CD4-positive, alpha-beta T cell (primary cell): ENCODE measurements at regions of chr22 and their contacts with region 1.

Region 1: DNA sequence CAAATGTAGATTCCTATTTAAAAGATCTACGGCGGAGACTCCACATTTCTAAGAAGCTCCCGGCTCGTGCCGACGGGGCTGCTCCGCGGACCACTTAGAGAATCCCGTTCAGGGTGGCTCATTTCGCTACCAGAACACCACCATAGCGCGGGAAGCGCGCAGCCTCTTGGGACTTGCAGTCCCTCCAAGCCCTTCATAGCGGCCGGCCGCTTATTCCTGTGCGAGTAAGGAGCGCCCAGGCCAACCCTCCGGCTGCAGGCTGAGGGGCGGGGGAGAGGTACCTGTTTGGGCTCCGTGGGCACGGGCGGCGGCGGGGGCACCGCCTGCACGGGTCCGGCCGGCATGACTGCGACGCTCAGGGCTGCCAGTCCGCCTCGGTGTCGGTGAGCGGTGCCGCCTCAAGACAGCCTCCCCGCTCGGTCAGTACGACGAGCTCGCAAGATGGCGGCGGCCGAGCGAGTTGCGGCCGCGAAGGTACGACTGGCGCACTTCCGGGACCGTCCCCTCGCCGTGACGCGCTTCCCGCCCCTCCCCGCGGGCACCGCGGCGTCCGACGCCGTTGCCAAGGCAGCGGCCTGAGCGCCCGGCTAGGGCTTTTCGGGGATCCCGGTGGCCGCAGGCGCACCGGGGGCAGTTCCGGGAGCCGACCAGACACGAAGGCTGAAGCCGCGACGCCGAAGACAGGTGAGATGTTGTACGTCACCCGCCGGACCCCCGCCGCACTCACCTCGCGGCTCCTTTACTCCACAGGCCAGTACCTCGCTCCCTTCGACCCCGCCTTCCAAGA is at the starts of genes CCDC157 and SF3A1:
- DNase-seq: peak; percentile 70 to 95 (median 80)
- ATAC-seq: peak; percentile 85
- H3K4me3 ChIP-seq: peak within 1 kb of the TSS; percentile 90
- H3K4me3 Mint-ChIP-seq: peak within 1 kb of the TSS; percentile 100
- H3K27ac ChIP-seq: peak within 1 kb of the TSS; percentile 89 to 95
- H3K27ac Mint-ChIP-seq: peak within 1 kb of the TSS; percentile 99
- H3K4me1 ChIP-seq: peaks cover 51% of the 10 kb centered on the region
- H3K4me1 Mint-ChIP-seq: peaks cover 57% of the 10 kb centered on the region
- H3K27me3 ChIP-seq: no peaks in the 10 kb centered on the region
- H3K27me3 Mint-ChIP-seq: no peaks in the 10 kb centered on the region
- CTCF ChIP-seq: no peak
- total RNA-seq, gene CCDC157: 8.3 to 10.1 TPM
- total RNA-seq, gene SF3A1: 335 to 388 TPM

Region 2: GRCh38 chr22:30297991-30298719 is 58.5 kb before region 1 on chr22:
- CTCF ChIA-PET with region 1: no interaction called
- POLR2A ChIA-PET with region 1: interaction called, 88 read pairs
- intact Hi-C with region 1: no loop called
- DNase-seq: no peak
- ATAC-seq: no peak
- H3K4me3 ChIP-seq: no peak overlapping the region
- H3K4me3 Mint-ChIP-seq: peak overlapping the region; percentile 4
- H3K27ac ChIP-seq: peak overlapping the region; percentile 74 to 86
- H3K27ac Mint-ChIP-seq: peak overlapping the region; percentile 83
- H3K4me1 ChIP-seq: peaks cover 89% of the 10 kb centered on the region
- H3K4me1 Mint-ChIP-seq: peaks cover 83% of the 10 kb centered on the region
- H3K27me3 ChIP-seq: no peaks in the 10 kb centered on the region
- H3K27me3 Mint-ChIP-seq: no peaks in the 10 kb centered on the region
- CTCF ChIP-seq: no peak

Region 3: DNA sequence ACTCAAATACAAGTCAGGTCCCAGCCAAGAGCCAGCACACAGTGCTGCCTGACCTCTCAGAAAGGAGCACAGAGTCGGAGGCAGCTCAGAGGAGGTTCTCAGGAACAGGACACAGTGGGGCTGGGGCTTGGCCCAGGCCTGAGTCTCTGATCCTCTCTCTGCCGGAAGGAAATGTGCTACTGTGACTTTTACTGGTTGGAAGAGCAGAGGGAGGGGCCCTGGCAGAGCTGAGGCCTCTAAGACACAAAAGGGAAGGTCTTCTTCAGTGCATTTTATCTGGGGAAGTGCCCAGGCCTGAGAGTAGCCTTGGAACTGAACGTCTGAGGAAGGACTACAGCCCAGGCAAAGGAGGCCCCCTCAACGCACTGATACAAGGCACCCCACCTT is 51.1 kb before region 1 on chr22:
- CTCF ChIA-PET with region 1: no interaction called
- POLR2A ChIA-PET with region 1: interaction called, 47 read pairs
- intact Hi-C with region 1: loop called in 1 of 2 experiments (anchors 2 kb)
- DNase-seq: peak in 12 of 14 experiments; percentile 29 to 88 (median 54)
- ATAC-seq: peak; percentile 63
- H3K4me3 ChIP-seq: peak overlapping the region; percentile 34
- H3K4me3 Mint-ChIP-seq: peak overlapping the region; percentile 49
- H3K27ac ChIP-seq: peak overlapping the region; percentile 74 to 81
- H3K27ac Mint-ChIP-seq: peak overlapping the region; percentile 83
- H3K4me1 ChIP-seq: peaks cover 97% of the 10 kb centered on the region
- H3K4me1 Mint-ChIP-seq: peaks cover 97% of the 10 kb centered on the region
- H3K27me3 ChIP-seq: no peaks in the 10 kb centered on the region
- H3K27me3 Mint-ChIP-seq: no peaks in the 10 kb centered on the region
- CTCF ChIP-seq: no peak

Region 4: DNA sequence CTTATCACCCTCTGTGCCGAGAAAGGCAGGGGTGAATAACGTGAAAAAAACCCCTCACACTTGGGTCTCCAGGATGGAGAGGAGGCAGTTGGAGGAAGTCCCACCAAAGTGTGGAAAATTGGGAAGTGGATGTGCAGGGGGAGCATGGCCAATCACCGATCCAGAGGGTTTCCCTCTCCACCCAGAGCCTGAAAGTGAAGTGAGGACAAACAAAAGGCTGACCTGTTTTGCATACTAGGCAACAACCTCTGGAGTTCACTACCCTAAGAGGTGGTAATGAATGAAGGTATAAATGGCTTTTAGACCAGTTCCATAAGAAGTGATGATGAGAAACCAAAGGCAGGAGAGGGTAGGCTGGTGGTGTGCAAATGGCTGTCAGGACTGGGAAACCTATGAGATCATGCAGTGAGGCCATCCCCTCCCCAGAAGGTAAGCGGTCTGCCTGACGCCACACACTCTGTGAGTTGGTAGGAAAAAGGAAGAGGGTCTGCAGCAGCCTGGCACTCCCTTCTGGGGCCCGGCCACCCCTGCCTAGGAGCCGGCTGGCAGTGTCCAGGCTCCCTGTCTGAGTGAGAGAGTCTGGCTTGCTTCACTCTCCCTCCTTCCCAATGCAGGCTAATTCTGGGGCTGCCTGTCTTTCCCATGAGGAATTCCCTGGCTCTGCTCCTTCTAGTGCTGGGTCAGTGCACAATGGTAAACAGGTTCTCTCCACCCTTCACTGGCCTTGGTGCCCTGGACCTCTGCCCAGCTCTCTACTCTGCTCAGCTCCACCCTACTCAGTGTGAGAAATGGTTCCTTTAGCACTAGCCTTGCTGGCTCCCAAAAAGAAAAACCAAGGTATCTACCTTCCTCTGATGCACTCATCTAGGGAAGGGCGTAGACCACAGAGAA is 45.5 kb before region 1 on chr22:
- CTCF ChIA-PET with region 1: no interaction called
- POLR2A ChIA-PET with region 1: interaction called, 47 read pairs
- intact Hi-C with region 1: loop called in 1 of 2 experiments (anchors 2 kb)
- DNase-seq: no peak
- ATAC-seq: no peak
- H3K4me3 ChIP-seq: no peak overlapping the region
- H3K4me3 Mint-ChIP-seq: peak overlapping the region; percentile 18
- H3K27ac ChIP-seq: peak overlapping the region; percentile 62 to 86
- H3K27ac Mint-ChIP-seq: peak overlapping the region; percentile 83
- H3K4me1 ChIP-seq: peaks cover 95% of the 10 kb centered on the region
- H3K4me1 Mint-ChIP-seq: peaks cover 94% of the 10 kb centered on the region
- H3K27me3 ChIP-seq: no peaks in the 10 kb centered on the region
- H3K27me3 Mint-ChIP-seq: no peaks in the 10 kb centered on the region
- CTCF ChIP-seq: no peak

Region 5: GRCh38 chr22:30326706-30327362 is 29.8 kb before region 1 on chr22 and contains the start of gene TBC1D10A:
- CTCF ChIA-PET with region 1: interaction called, 3 read pairs
- POLR2A ChIA-PET with region 1: interaction called, 52 read pairs
- intact Hi-C with region 1: loop called (anchors 2 kb)
- DNase-seq: peak; percentile 84 to 98 (median 94)
- ATAC-seq: peak; percentile 89
- H3K4me3 ChIP-seq: peak within 1 kb of the TSS; percentile 71
- H3K4me3 Mint-ChIP-seq: peak within 1 kb of the TSS; percentile 93
- H3K27ac ChIP-seq: peak within 1 kb of the TSS; percentile 63 to 74
- H3K27ac Mint-ChIP-seq: peak within 1 kb of the TSS; percentile 97
- H3K4me1 ChIP-seq: peaks cover 54% of the 10 kb centered on the region
- H3K4me1 Mint-ChIP-seq: peaks cover 51% of the 10 kb centered on the region
- H3K27me3 ChIP-seq: no peaks in the 10 kb centered on the region
- H3K27me3 Mint-ChIP-seq: no peaks in the 10 kb centered on the region
- CTCF ChIP-seq: no peak
- total RNA-seq, gene TBC1D10A: 38.9 to 41.8 TPM

Region 6: GRCh38 chr22:30332561-30332960 is 24.1 kb before region 1 on chr22:
- CTCF ChIA-PET with region 1: no interaction called
- POLR2A ChIA-PET with region 1: interaction called, 52 read pairs
- intact Hi-C with region 1: loop called (anchors 2 kb)
- DNase-seq: no peak
- ATAC-seq: no peak
- H3K4me3 ChIP-seq: no peak overlapping the region
- H3K4me3 Mint-ChIP-seq: no peak overlapping the region
- H3K27ac ChIP-seq: no peak overlapping the region
- H3K27ac Mint-ChIP-seq: no peak overlapping the region
- H3K4me1 ChIP-seq: peaks cover 3% of the 10 kb centered on the region
- H3K4me1 Mint-ChIP-seq: peaks cover 10% of the 10 kb centered on the region
- H3K27me3 ChIP-seq: no peaks in the 10 kb centered on the region
- H3K27me3 Mint-ChIP-seq: no peaks in the 10 kb centered on the region
- CTCF ChIP-seq: no peak